Right cardiac atrium (tissue), 5 donors: ENCODE measurements at regions of chr22 and their contacts with region 1.

Region 1: DNA sequence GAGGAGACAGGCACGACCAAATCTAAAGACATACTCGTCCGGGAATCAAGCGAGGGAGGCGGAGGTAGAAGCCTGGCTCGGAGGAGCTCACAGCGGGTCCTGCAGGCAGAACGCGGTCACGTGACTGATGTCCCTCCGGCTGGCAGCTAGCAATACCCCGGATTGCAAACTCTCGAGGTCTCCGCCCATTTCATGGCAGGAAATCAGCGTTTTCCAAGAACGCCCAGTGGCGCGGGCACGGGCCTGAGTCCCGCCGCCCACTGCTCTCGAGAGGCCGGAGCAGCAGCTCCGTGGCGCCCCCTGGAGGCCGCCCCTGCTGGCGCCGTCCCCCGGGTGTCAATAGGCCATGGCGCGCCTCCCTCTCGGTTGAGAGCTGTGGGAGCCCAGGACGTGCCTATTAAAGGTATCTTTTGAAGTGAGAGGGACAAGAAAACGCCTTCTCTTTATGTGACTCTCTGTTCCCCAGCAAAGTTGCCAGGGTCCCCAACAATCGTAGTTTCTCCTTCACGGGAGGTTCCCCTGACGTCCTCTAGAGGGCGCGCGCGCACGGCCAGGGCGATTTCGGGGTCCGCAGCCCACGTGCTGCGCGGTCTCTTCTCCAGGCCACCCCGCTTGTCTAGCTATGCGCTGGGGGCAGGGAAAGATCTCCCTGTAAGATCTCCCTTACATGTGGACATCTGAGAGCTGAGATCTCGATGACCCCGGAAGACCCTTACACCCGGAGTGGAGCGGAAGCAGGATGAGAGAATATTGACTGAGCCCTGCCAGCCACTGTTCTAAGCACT is 37.3 kb upstream of the RBFOX2 start:
- DNase-seq: peak; percentile 95 to 97 (median 96)
- ATAC-seq: peak; percentile 95
- H3K4me3 ChIP-seq: peak overlapping the region; percentile 47
- H3K27ac ChIP-seq: peak overlapping the region; percentile 88
- H3K4me1 ChIP-seq: no peaks in the 10 kb centered on the region
- H3K27me3 ChIP-seq: no peaks in the 10 kb centered on the region

Region 2: GRCh38 chr22:35930933-35931332 is 135.0 kb before region 1 on chr22:
- intact Hi-C with region 1: loop called in 3 of 4 experiments (anchors 5 kb)
- DNase-seq: no peak
- ATAC-seq: peak; percentile 93 to 94
- H3K4me3 ChIP-seq: no peak overlapping the region
- H3K27ac ChIP-seq: no peak overlapping the region
- H3K4me1 ChIP-seq: peaks cover 1% of the 10 kb centered on the region
- H3K27me3 ChIP-seq: no peaks in the 10 kb centered on the region